ENCODE measurements at regions of chr5 and their contacts with region 1.

Region 1: DNA sequence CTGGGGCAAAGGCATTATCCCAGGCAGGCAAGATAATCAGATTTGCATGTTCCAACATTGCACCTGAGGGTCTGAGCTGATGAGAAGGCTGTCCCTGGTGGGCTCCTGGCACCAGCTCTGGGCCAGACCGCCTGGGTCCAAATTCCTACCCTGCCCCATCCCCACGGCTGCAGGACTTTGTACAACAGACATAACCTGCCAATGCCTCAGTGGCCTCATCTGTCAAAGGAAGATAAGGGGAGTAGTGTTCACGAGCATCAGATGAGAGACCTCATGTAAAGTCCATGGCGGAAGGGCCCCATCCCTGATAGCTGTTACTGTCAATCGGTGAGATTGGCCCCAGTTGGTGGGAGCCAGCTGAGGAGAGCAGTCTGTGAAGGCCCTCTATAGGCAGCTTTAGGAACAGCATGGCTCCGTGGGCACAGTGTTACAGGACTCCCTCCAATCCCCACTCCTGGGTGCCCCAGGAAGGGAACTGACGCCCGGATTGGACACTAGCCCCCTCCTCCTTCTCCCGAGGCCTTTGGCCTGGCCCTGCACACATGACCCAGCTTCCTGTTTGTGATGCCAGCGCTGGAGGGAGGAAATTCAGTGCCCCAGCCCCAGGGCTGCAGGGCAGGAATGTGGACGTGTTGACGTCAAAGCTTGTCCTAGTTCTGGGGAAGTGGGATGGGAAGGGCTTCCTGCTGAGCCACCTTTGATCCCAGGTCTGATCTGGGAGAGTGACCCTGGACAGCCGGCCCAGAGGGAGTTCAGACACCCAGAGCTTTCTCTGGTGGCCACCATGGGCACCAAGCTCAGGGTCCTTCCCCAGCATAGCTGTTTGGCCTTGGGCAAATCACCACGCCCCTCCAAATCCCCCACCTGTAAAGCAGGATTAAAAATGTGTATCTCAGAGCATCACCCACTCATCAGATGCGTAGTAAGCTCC is 56.2 kb downstream of the DUSP1 start:
- DNase-seq: peak; percentile 98 to 99
- ATAC-seq: peak; percentile 82 to 89
- H3K4me3 ChIP-seq: no peak overlapping the region
- H3K27ac ChIP-seq: peak overlapping the region; percentile 98
- H3K4me1 ChIP-seq: peaks cover 45% of the 10 kb centered on the region
- CTCF ChIP-seq: peak; percentile 63
- EP300 ChIP-seq: peak; percentile 99 to 100
- POLR2A ChIP-seq: no peak
- RAD21 ChIP-seq: peak; percentile 59 to 60

Region 2: DNA sequence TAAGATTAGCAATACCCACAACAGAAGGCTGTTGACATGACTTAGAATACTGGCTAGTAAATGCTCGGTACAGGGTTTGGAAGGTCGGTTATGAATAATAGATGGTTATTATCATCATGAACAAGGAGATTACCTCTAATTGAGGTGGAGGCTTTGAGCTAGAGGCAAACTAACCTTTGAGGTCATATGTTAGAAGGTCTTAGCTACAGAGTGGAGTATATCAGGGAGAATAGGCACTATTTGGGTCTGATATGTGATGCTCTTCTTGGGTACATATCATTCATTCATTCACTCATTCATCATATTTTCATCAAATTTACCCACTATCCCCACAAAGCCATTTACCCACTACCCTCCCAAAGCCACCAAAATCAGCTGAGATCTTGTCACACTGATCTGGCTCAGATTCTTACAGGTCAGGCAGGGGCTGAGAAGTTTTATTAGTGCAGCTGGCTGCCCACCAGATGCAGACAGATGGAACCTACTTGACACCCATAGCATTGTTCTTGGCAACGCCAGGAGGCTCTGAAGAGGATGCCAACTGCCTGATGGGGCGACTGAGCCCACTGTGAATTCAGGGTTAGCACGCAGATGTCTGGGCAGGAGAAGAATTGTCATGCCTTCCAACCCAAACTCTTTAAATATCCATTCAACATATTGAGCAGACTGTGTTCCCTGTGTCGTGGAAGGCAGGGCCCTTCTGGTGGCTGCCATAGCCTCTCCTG is 170.2 kb before region 1 on chr5:
- CTCF ChIA-PET with region 1: no interaction called
- POLR2A ChIA-PET with region 1: no interaction called
- DNase-seq: no peak
- ATAC-seq: no peak
- H3K4me3 ChIP-seq: no peak overlapping the region
- H3K27ac ChIP-seq: no peak overlapping the region
- H3K4me1 ChIP-seq: no peaks in the 10 kb centered on the region
- CTCF ChIP-seq: no peak
- EP300 ChIP-seq: no peak
- POLR2A ChIP-seq: no peak
- RAD21 ChIP-seq: no peak

Region 3: GRCh38 chr5:172688349-172689217 is 26.2 kb before region 1 on chr5:
- CTCF ChIA-PET with region 1: no interaction called
- POLR2A ChIA-PET with region 1: no interaction called
- DNase-seq: no peak
- ATAC-seq: peak in 1 of 2 experiments; percentile 37; a peak in 1 of 6 replicates
- H3K4me3 ChIP-seq: no peak overlapping the region
- H3K27ac ChIP-seq: no peak overlapping the region
- H3K4me1 ChIP-seq: no peaks in the 10 kb centered on the region
- CTCF ChIP-seq: no peak
- EP300 ChIP-seq: no peak
- POLR2A ChIP-seq: no peak
- RAD21 ChIP-seq: no peak

Region 4: DNA sequence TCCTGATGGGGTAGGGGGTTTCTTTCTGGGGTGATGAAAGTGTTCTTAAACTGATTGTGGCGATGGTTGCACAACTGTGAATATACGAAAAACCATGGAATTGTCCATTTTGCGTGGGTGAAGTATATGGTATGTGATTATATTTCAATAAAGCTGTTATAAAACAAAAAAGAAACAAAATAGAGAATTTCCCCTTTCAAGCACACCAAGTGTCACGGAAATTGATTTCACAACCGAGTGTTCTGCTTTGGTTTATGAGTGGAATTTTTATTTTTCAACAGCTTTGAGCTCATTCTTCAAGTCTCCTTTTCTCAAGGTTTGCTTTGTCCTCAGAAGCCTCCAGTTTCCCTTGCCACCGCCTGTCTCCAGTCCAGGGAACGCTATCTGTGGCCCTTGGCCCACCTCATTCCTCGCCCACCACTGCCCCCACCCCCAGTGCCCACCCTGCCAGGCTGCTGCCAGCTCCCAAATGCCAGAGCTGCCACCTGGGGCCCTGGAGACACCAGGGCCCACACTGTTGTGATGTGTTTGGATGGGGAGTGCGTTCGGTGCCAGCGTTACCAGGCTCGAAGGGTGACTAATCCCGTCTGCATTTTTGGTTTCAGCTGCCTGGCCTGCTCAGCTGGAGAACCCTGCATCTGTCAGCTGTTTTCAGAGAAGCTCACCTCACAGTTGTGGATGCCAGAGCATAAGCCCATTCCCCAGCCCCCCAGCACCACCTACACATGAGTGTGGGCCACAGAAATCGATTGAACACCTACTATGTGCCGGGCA is 25.9 kb after region 1 on chr5:
- CTCF ChIA-PET with region 1: interaction called, 31 read pairs
- POLR2A ChIA-PET with region 1: no interaction called
- DNase-seq: peak; percentile 65 to 80
- ATAC-seq: peak; percentile 95 to 96
- H3K4me3 ChIP-seq: no peak overlapping the region
- H3K27ac ChIP-seq: peak overlapping the region; percentile 73 to 86
- H3K4me1 ChIP-seq: peaks cover 20% of the 10 kb centered on the region
- CTCF ChIP-seq: no peak
- EP300 ChIP-seq: no peak
- POLR2A ChIP-seq: no peak
- RAD21 ChIP-seq: no peak

Region 5: DNA sequence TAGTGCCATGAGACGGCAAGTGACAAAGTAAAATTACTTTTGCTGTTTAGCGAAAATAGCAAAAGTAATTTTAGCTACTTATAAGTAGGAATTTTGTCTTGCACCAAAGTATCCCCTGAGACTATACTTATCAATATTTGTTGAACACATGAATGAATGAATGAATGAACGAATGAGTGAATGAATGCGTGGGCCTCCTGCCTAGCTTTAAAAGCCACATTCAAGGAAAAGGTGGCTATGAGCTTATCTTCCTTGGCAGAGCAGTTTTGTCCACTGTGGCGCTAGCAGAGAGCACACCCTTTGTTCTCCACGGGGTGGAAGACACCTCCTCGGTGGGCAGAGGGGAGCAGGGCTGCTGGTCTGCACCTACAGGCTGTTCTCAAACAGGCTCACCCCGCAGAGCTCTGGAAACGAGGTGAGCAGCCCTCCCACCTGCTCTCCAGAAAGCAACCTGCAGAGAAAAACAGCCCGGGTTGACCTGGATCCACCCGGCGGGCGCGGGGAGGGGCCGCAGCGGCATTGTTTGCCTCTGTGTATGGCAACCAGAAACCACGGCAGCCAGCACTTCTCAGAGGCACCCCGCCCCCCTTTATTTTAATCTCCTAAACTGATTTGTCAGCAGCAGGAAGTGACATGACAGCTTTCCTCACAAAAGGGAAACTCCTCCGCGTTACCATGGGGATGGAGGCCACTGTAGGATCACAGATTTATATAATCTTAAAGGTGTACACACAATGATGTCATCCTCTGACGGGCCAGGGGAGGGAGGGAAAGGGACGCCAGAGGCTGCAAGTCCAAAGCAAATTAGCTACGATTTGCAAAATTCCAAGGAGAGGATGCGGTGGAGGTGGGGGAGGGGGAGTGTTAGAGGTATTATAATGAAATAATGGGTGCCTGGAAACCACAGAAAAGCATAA is 50.4 kb after region 1 on chr5:
- CTCF ChIA-PET with region 1: interaction called, 68 read pairs
- POLR2A ChIA-PET with region 1: interaction called, 68 read pairs
- DNase-seq: peak; percentile 98 to 100
- ATAC-seq: peak; percentile 60 to 64
- H3K4me3 ChIP-seq: peak overlapping the region; percentile 23
- H3K27ac ChIP-seq: peak overlapping the region; percentile 97 to 100
- H3K4me1 ChIP-seq: peaks cover 15% of the 10 kb centered on the region
- CTCF ChIP-seq: no peak
- EP300 ChIP-seq: peak in 1 of 2 experiments; percentile 73; a peak in 1 of 5 replicates
- POLR2A ChIP-seq: no peak
- RAD21 ChIP-seq: peak in 1 of 2 experiments; percentile 39; a peak in 2 of 5 replicates

Region 6: GRCh38 chr5:172860520-172861443 is 146.0 kb after region 1 on chr5:
- CTCF ChIA-PET with region 1: interaction called, 26 read pairs
- POLR2A ChIA-PET with region 1: no interaction called
- DNase-seq: no peak
- ATAC-seq: peak; percentile 8 to 23; a peak in 3 of 6 replicates
- H3K4me3 ChIP-seq: no peak overlapping the region
- H3K27ac ChIP-seq: peak overlapping the region; percentile 96 to 99
- H3K4me1 ChIP-seq: peaks cover 99% of the 10 kb centered on the region
- CTCF ChIP-seq: no peak
- EP300 ChIP-seq: no peak
- POLR2A ChIP-seq: no peak
- RAD21 ChIP-seq: no peak

Region 7: GRCh38 chr5:172902497-172903200 is 187.9 kb after region 1 on chr5:
- CTCF ChIA-PET with region 1: interaction called, 99 read pairs
- POLR2A ChIA-PET with region 1: interaction called, 7 read pairs
- DNase-seq: peak; percentile 82 to 99
- ATAC-seq: peak; percentile 48 to 65
- H3K4me3 ChIP-seq: no peak overlapping the region
- H3K27ac ChIP-seq: peak overlapping the region; percentile 99 to 100
- H3K4me1 ChIP-seq: peaks cover 98% of the 10 kb centered on the region
- CTCF ChIP-seq: peak; percentile 60
- EP300 ChIP-seq: peak; percentile 99 to 100; a peak in 4 of 5 replicates
- POLR2A ChIP-seq: no peak
- RAD21 ChIP-seq: peak; percentile 78 to 90

Region 8: DNA sequence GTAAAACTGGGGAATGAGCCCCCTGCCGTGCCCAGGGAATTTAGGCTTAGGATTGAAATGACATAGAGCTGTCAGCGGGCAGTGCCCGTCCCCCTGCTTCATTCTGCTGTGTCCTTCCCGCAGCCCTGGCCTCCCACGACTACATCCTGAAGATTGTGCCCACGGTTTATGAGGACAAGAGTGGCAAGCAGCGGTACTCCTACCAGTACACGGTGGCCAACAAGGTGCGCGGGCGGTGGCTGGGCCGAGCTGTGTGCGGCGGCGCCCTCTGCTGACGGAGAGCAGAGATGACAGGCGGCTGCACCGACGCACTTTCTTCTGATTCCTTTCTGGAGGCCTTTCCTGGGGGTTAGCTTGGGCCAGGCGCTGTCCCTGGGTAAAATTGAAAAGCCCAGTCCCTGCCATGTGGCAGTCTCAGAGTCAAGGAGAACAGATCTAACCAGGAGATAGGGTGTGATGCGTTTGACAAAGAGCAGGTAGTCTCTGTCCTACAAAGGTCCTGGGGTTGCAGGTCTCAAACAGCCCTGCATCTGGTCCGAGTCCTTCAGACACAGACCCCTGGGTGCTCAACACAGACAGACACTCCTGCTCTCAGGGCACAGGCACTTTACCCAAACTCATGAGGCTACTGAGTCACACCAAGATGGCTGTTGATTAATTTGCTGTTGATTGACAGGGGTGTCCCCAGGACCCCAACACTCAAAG is 217.7 kb after region 1 on chr5:
- CTCF ChIA-PET with region 1: interaction called, 480 read pairs
- POLR2A ChIA-PET with region 1: interaction called, 4 read pairs
- DNase-seq: peak; percentile 76 to 86
- ATAC-seq: peak; percentile 66 to 81
- H3K4me3 ChIP-seq: no peak overlapping the region
- H3K27ac ChIP-seq: peak overlapping the region; percentile 98 to 100
- H3K4me1 ChIP-seq: peaks cover 47% of the 10 kb centered on the region
- CTCF ChIP-seq: peak; percentile 89
- EP300 ChIP-seq: no peak
- POLR2A ChIP-seq: no peak
- RAD21 ChIP-seq: peak; percentile 92 to 97

Region 9: GRCh38 chr5:172958331-172959046 is 243.7 kb after region 1 on chr5:
- CTCF ChIA-PET with region 1: interaction called, 15 read pairs
- POLR2A ChIA-PET with region 1: interaction called, 7 read pairs
- DNase-seq: peak; percentile 66 to 84
- ATAC-seq: peak; percentile 77 to 78
- H3K4me3 ChIP-seq: peak overlapping the region; percentile 65
- H3K27ac ChIP-seq: peak overlapping the region; percentile 94 to 95
- H3K4me1 ChIP-seq: peaks cover 57% of the 10 kb centered on the region
- CTCF ChIP-seq: no peak
- EP300 ChIP-seq: no peak
- POLR2A ChIP-seq: no peak
- RAD21 ChIP-seq: no peak; a peak in 1 of 5 replicates

Measured in A549 (cell line).